GM10248 (cell line): ENCODE measurements at regions of chr2 and their contacts with region 1.

Region 1: DNA sequence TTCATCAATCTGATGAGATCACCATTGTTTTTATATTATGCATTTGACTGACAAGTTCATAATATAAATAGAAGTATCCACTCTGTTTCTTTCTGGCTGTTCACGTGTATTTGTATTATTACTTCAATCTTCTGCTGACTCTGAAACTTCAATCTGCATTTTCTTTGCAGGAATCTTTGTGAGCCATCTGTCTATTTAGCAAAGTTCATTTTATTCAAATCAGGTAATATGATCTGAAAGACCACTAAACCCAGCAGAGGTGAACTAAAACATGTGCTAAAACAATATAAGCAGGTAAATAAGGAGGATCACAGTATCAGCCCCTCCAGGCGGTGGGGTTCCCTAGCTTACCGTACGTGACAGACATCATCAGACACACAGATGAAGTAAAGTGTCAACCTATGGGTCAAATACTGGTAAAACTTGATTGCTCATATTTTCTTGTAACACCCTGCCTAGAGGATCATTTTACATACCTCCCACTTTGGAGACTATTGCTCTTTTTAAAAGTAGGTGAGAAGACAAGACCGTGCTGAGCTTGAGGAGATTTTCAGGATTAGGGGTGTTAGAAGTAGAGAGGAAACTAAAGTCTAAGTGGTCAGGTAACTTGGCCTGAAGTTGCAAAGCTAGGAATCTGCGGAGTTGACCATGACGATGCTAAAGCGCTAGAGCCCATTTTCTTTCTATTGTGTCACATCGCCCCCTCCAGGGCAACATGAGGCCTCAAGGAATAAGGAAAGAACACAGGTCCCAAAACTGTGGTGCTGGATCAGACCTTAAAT is 9.0 kb downstream of the DTNB start:
- DNase-seq: peak; percentile 38
- CTCF ChIP-seq: peak; percentile 65

Region 2: DNA sequence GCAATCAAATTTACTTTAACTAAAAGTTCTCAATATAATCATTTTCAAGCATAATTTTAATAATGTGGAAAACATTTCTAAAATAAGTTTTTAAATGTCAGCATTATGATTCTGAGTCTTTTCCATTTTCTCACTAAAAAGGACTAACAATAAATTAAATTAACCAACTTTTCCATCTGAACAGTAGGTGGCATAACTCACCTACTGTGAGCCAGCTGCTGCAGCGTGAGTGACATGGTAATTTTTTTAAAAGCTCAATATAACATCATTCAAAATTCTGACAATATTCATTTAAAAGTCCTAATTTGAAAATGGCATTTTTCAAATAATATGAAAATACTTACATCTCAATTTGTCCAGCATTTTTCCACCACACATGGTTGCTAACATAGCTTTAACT is 57.5 kb before region 1 on chr2:
- CTCF ChIA-PET with region 1: interaction called, 68 read pairs
- POLR2A ChIA-PET with region 1: no interaction called
- DNase-seq: peak; percentile 22
- CTCF ChIP-seq: peak; percentile 45

Region 3: GRCh38 chr2:25618642-25619037 is 45.7 kb before region 1 on chr2:
- CTCF ChIA-PET with region 1: interaction called, 15 read pairs
- POLR2A ChIA-PET with region 1: no interaction called
- DNase-seq: no peak
- CTCF ChIP-seq: no peak

Region 4: DNA sequence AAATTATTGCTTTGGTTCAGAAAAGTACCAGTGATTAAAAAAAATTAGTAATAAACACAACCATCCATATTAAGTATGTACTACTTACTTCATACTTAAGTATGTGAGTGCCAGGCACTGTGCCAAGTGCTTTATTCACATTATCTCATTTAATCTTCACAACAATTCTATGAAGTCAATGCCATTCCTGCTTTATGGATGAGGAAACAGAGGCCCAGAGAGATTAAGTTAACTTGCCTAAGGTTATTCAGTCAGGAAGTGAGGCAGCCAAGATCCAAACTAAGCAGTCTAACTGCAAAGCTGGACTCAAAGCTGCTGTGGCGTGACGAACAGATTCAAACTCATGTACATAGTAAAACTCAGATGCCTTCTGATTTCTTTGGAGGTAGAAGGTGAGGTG is 13.3 kb before region 1 on chr2:
- CTCF ChIA-PET with region 1: interaction called, 23 read pairs
- POLR2A ChIA-PET with region 1: no interaction called
- DNase-seq: no peak
- CTCF ChIP-seq: no peak

Region 5: GRCh38 chr2:25722224-25722623 is 57.9 kb after region 1 on chr2:
- CTCF ChIA-PET with region 1: no interaction called
- POLR2A ChIA-PET with region 1: no interaction called
- DNase-seq: no peak
- CTCF ChIP-seq: no peak